Activated T-helper 1 cell treated with anti-CD3 and anti-CD28 coated beads, Interleukin-12 subunit alpha, Interleukin-12 subunit beta, Interleukin-2, Interleukin-4 antibody, amounts not matched to agents 30 ng/mL and 10 ng/mL and 1 ng/mL, durations not matched to agents 14 hours and 24 hours and 36 hours (primary cell): ENCODE measurements at regions of chr12 and their contacts with region 1.

Region 1: DNA sequence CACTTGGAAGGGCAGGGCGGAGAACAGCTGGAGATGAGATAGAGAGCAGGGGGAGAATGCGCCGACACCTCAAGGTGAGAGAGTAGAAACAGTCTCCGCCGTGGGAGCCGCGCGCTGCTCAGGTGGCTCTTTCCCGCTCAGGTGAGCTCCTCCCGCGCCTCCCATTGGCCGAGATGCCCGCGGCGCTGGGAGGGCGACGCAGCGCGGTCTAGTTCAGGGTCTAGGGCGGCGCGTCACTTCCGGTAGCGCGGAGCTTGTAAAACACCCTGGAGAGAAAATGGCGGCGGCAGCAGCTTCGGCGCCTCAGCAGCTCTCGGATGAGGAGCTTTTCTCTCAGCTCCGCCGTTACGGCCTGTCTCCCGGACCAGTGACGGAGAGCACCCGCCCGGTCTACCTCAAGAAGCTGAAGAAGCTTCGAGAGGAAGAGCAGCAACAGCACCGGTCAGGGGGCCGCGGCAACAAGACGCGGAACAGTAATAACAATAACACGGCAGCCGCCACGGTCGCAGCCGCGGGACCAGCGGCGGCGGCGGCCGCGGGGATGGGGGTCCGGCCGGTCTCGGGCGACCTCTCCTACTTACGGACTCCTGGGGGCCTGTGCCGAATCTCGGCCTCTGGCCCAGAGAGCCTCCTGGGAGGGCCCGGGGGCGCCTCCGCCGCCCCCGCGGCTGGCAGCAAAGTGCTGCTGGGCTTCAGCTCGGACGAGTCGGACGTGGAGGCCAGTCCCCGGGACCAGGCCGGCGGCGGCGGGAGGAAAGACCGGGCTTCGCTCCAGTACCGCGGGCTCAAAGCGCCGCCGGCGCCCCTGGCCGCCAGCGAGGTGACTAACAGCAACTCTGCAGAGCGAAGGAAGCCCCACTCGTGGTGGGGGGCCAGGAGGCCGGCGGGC is at the start of gene LEMD3:
- DNase-seq: peak; percentile 91
- H3K4me3 Mint-ChIP-seq: peak within 1 kb of the TSS; percentile 99
- H3K27ac Mint-ChIP-seq: peak within 1 kb of the TSS; percentile 94
- H3K4me1 Mint-ChIP-seq: peaks cover 7% of the 10 kb centered on the region
- H3K27me3 Mint-ChIP-seq: peaks cover 5% of the 10 kb centered on the region
- total RNA-seq, gene LEMD3: 26.5 and 34.6 TPM in 2 replicates

Region 2: GRCh38 chr12:64403707-64404469 is 765.7 kb before region 1 on chr12 and contains the start of gene XPOT:
- intact Hi-C with region 1: loop called (anchors 1 kb)
- DNase-seq: peak; percentile 92
- H3K4me3 Mint-ChIP-seq: peak within 1 kb of the TSS; percentile 95
- H3K27ac Mint-ChIP-seq: peak within 1 kb of the TSS; percentile 99
- H3K4me1 Mint-ChIP-seq: peaks cover 20% of the 10 kb centered on the region
- H3K27me3 Mint-ChIP-seq: no peaks in the 10 kb centered on the region
- total RNA-seq, gene XPOT: 145 and 146 TPM in 2 replicates

Region 3: GRCh38 chr12:64679487-64679983 is 490.0 kb before region 1 on chr12:
- intact Hi-C with region 1: loop called (anchors 10 kb)
- DNase-seq: peak; percentile 51
- H3K4me3 Mint-ChIP-seq: peak overlapping the region; percentile 53
- H3K27ac Mint-ChIP-seq: peak overlapping the region; percentile 84
- H3K4me1 Mint-ChIP-seq: peaks cover 82% of the 10 kb centered on the region
- H3K27me3 Mint-ChIP-seq: no peaks in the 10 kb centered on the region

Region 4: GRCh38 chr12:65156366-65156841 is 13.2 kb before region 1 on chr12:
- intact Hi-C with region 1: loop called (anchors 1 kb)
- DNase-seq: peak; percentile 6
- H3K4me3 Mint-ChIP-seq: peak overlapping the region; percentile 32
- H3K27ac Mint-ChIP-seq: peak overlapping the region; percentile 65
- H3K4me1 Mint-ChIP-seq: peaks cover 18% of the 10 kb centered on the region
- H3K27me3 Mint-ChIP-seq: peaks cover 13% of the 10 kb centered on the region

Region 5: DNA sequence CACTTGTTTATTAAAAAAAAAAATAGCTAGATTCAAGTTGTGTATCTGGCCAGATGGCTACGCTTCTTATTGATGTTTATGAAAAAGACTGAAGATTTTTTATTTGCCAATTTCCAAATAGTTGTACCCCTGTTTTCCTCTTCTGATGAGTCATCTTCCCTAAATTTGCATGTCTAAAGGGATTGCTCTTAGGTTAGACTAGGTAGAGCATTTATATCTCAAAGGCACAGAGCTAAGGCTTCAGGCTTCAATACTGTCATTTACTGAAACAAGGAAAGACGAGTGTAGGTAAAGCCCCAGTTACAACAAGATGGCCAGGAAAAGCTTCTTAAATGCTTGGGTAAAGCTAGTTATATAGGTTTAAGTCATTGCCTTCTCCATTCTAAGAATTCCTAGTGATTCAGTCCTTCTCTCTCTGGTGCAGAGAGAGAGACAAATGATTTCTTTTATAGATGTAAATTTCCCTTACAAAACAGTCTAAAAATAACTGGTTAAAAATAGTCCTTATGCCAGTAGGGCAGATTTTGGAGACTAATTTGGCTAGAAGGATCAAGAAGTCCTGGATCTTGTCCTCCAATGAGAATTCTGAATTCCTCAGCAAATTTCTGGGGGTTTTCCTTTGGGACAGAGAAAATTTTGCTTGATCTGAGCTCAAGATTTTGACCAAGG is 26.0 kb after region 1 on chr12:
- intact Hi-C with region 1: loop called (anchors 2 kb)
- DNase-seq: no peak
- H3K4me3 Mint-ChIP-seq: no peak overlapping the region
- H3K27ac Mint-ChIP-seq: peak overlapping the region; percentile 29
- H3K4me1 Mint-ChIP-seq: peaks cover 66% of the 10 kb centered on the region
- H3K27me3 Mint-ChIP-seq: no peaks in the 10 kb centered on the region

Region 6: GRCh38 chr12:65248656-65249633 is 79.4 kb after region 1 on chr12:
- intact Hi-C with region 1: loop called (anchors 1 kb)
- DNase-seq: no peak
- H3K4me3 Mint-ChIP-seq: no peak overlapping the region
- H3K27ac Mint-ChIP-seq: peak overlapping the region; percentile 87
- H3K4me1 Mint-ChIP-seq: peaks cover 15% of the 10 kb centered on the region
- H3K27me3 Mint-ChIP-seq: peaks cover under 1% of the 10 kb centered on the region